Gastrocnemius medialis (tissue), 4 donors: ENCODE measurements at regions of chr2 and their contacts with region 1.

Region 1: DNA sequence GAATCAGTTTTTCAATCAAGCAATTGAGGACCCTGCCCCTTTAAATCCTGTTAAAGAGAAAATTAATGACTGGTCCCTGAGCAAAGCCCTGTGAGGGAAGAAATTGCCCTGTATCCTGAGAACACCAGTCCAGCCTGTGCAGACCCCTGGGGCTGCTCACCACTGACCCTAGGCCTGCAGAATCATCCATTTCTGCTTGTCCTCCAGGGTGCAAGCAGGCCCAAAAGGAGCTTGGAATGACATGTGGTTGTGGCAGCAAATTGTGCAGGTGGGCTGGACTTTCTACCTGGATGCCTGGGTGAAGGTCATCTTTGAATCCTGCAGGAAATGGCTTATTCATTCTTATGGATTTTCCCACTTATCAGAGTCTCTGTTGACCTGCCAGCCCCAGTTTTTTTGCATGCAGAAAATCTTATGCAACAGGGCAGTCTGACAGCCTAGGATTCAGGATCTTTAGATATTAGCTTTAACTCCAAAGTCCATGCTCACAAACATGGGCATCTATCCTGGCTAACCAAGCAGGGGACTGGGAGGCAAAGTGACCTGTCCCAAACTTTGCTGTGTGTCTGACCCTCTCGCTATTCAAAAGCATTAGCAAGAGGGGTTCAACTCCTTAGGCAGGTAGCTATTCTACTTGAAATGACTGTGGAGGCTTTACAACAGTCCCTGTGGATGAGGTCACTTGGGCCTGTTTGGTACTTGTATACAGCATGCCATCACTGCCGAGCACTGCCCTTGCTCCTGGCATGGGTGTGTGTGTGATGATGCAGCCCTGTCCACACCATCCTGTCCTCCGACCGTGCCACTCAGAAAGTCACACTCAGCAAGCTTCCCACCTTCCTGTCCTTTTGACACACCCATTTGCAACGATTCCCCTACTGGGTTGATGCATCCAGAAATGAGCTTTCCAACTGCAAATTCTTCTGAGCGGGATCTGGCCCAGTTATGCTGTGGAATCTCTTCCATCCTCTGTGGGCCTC is 85.3 kb downstream of the CAPN13 start:
- DNase-seq: no peak
- ATAC-seq: no peak
- H3K4me3 ChIP-seq: no peak overlapping the region
- H3K27ac ChIP-seq: no peak overlapping the region
- H3K4me1 ChIP-seq: no peaks in the 10 kb centered on the region
- H3K27me3 ChIP-seq: peaks cover 0 to 6% (median 0%) of the 10 kb centered on the region in 3 donors
- CTCF ChIP-seq: no peak
- POLR2A ChIP-seq: no peak

Region 2: DNA sequence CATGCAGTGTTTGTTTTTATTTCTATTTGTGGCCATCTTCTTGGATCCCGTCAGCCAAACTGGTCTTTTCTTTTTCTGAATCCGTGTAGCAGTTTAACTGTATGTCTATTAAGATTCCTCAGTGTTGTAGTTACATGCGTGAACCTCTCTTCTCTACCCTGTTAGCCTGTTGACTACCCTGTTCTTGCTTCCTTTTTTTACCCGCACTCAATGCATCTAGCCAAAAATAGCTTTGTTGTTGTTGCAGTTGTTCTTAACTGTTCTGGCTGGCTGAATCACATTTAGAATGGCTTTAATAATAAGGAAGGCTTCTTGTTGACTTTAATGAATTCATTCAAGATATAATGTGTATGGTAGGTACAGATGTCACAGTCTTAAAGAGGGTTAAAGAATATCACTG is 137.8 kb before region 1 on chr2:
- in situ Hi-C with region 1: no loop called
- intact Hi-C with region 1: no loop called
- DNase-seq: no peak
- ATAC-seq: peak; percentile 55 to 84
- H3K4me3 ChIP-seq: no peak overlapping the region
- H3K27ac ChIP-seq: peak overlapping the region; percentile 46 to 74 (median 66)
- H3K4me1 ChIP-seq: peaks cover 15 to 38% of the 10 kb centered on the region in 2 donors
- H3K27me3 ChIP-seq: no peaks in the 10 kb centered on the region
- CTCF ChIP-seq: no peak
- POLR2A ChIP-seq: no peak

Region 3: GRCh38 chr2:30686000-30686399 is 36.0 kb before region 1 on chr2:
- in situ Hi-C with region 1: no loop called
- intact Hi-C with region 1: no loop called
- DNase-seq: no peak
- ATAC-seq: no peak
- H3K4me3 ChIP-seq: no peak overlapping the region
- H3K27ac ChIP-seq: no peak overlapping the region
- H3K4me1 ChIP-seq: peaks cover 14 to 21% of the 10 kb centered on the region in 2 donors
- H3K27me3 ChIP-seq: no peaks in the 10 kb centered on the region
- CTCF ChIP-seq: no peak
- POLR2A ChIP-seq: no peak

Region 4: DNA sequence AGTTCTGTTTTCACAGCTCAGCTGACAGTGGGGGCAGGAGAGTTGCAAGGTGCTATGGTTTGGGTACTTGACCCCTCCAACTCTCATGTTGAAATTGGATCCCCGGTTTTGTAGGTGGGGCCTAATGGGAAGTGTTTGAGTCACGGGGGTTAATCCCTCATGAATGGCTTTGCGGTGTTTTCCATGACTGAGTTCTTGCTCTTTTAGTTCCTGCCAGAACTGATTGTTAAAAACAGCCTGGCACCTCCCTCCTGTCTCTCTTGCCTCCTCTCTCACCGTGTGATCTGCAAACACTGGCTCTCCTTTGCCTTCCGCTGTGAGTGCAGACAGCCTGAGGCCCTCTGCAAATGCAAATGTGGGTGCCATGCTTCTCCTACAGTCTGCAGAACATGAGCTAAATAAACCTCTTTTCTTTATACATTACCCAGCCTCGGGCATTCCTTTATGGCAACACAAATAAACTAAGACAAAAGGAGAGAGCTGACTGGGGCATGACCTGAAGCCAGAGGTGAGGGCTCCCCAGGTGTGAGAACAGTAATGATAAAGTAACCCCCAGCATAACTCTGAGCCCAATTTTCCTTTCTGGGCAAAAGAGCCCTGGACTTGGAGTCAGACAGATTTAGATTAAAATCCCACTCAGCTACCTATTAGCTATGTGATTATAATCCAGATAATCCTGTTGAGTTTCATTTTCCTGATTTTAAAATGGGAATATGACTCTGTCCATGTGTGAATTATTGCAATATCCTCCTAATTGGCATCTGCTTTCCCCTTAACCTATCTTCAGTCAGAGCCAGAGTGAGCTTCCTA is 150.2 kb after region 1 on chr2:
- in situ Hi-C with region 1: no loop called
- intact Hi-C with region 1: no loop called
- DNase-seq: no peak
- ATAC-seq: no peak
- H3K4me3 ChIP-seq: no peak overlapping the region
- H3K27ac ChIP-seq: no peak overlapping the region
- H3K4me1 ChIP-seq: peaks cover 0 to 5% of the 10 kb centered on the region in 2 donors
- H3K27me3 ChIP-seq: no peaks in the 10 kb centered on the region
- CTCF ChIP-seq: no peak
- POLR2A ChIP-seq: no peak

Region 5: GRCh38 chr2:31170071-31170698 is 448.2 kb after region 1 on chr2:
- in situ Hi-C with region 1: loop called (anchors 5 to 10 kb)
- intact Hi-C with region 1: no loop called
- DNase-seq: peak; percentile 26 to 46
- ATAC-seq: peak; percentile 82 to 83
- H3K4me3 ChIP-seq: no peak overlapping the region
- H3K27ac ChIP-seq: no peak overlapping the region
- H3K4me1 ChIP-seq: no peaks in the 10 kb centered on the region
- H3K27me3 ChIP-seq: no peaks in the 10 kb centered on the region
- CTCF ChIP-seq: peak; percentile 59 to 85 (median 79)
- POLR2A ChIP-seq: no peak

Region 6: DNA sequence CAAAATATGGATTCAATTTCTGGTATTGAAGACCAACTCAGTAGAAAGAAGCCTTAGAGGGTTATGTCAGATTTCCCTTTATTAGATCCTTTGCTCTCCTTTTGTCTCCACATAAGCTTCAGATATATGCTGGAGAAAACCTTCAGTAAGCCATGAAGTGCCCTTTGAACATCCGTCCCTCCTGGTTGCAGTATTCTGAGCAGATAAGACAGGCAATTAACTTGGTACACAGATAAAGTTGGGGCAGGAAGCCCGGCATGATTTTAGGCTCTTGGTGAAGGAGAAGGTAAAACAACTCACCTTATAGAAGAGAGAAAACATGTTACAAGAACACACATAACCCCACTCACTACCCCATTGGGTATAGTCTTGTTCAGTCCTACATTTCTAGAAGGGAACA is 782.4 kb after region 1 on chr2:
- in situ Hi-C with region 1: no loop called
- intact Hi-C with region 1: no loop called
- DNase-seq: no peak
- ATAC-seq: no peak
- H3K4me3 ChIP-seq: no peak overlapping the region
- H3K27ac ChIP-seq: no peak overlapping the region
- H3K4me1 ChIP-seq: no peaks in the 10 kb centered on the region
- H3K27me3 ChIP-seq: peaks cover 0 to 2% (median 0%) of the 10 kb centered on the region in 3 donors
- CTCF ChIP-seq: no peak
- POLR2A ChIP-seq: no peak